Transverse colon (tissue), 4 donors: ENCODE measurements at regions of chr16 and their contacts with region 1.

Region 1: GRCh38 chr16:26396511-26397235 is 670.1 kb upstream of the C16orf82 start:
- DNase-seq: no peak
- H3K4me3 ChIP-seq: no peak overlapping the region
- H3K27ac ChIP-seq: no peak overlapping the region
- H3K4me1 ChIP-seq: no peaks in the 10 kb centered on the region
- H3K27me3 ChIP-seq: no peaks in the 10 kb centered on the region
- CTCF ChIP-seq: no peak
- EP300 ChIP-seq: no peak
- POLR2A ChIP-seq: no peak

Region 2: DNA sequence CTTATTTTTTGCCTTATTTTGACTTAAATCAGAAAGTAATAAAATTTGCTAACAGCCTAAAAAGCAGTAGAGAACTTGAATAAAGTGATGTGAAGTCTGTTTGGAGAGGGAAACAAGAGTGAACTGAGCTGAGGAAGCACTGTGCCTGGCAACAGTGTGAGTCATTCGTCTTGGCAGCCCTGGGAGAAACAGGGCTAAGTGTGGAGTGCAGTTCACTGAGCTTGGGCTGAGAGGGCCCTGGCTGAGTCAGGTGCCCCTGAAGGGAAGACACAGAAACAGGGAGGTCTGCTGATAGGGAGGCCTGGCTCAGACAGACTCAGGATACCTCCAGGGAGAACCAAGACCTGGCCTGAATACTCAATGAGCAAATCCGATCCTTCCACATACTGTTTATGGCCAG is 572.8 kb before region 1 on chr16:
- in situ Hi-C with region 1: no loop called
- intact Hi-C with region 1: no loop called
- DNase-seq: no peak
- H3K4me3 ChIP-seq: no peak overlapping the region
- H3K27ac ChIP-seq: no peak overlapping the region
- H3K4me1 ChIP-seq: no peaks in the 10 kb centered on the region
- H3K27me3 ChIP-seq: no peaks in the 10 kb centered on the region
- CTCF ChIP-seq: no peak
- EP300 ChIP-seq: no peak
- POLR2A ChIP-seq: no peak

Region 3: GRCh38 chr16:26281381-26282110 is 115.1 kb before region 1 on chr16:
- in situ Hi-C with region 1: loop called in 1 of 4 experiments (anchors 25 kb)
- intact Hi-C with region 1: no loop called
- DNase-seq: no peak
- H3K4me3 ChIP-seq: no peak overlapping the region
- H3K27ac ChIP-seq: no peak overlapping the region
- H3K4me1 ChIP-seq: no peaks in the 10 kb centered on the region
- H3K27me3 ChIP-seq: no peaks in the 10 kb centered on the region
- CTCF ChIP-seq: no peak
- EP300 ChIP-seq: no peak
- POLR2A ChIP-seq: no peak

Region 4: DNA sequence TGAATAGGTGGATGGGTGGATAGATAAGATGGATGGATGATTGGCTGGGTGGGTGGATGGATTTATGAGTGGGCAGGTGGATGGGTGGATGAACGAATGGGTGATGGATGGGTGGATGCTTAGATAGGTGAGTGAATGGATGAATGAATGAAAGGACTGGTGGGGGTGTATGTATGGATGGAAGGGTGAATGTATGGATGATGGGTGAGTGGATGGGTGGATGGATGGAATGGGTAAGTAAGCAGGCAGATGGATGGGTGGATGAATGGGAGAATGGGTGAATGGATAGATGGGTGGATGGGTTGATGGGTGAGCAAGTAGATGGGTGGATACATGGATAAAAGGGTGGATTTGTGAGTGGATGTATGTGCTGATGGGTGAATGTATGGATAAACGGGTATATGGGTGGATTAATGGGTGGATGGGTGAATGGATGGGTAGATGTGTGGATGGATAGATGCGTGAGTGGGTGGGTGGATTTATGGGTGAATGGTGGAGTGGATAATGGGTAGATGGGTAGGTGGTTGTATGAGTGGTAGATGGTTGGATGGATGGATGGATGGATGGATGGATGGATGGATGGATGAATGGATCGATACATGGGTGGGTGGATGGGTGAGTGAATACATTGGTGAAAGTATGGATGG is 22.3 kb before region 1 on chr16:
- in situ Hi-C with region 1: no loop called
- intact Hi-C with region 1: no loop called
- DNase-seq: no peak
- H3K4me3 ChIP-seq: no peak overlapping the region
- H3K27ac ChIP-seq: no peak overlapping the region
- H3K4me1 ChIP-seq: no peaks in the 10 kb centered on the region
- H3K27me3 ChIP-seq: no peaks in the 10 kb centered on the region
- CTCF ChIP-seq: no peak
- EP300 ChIP-seq: no peak
- POLR2A ChIP-seq: no peak